IMR-90 (cell line): ENCODE measurements at regions of chr4 and their contacts with region 1.

Region 1: DNA sequence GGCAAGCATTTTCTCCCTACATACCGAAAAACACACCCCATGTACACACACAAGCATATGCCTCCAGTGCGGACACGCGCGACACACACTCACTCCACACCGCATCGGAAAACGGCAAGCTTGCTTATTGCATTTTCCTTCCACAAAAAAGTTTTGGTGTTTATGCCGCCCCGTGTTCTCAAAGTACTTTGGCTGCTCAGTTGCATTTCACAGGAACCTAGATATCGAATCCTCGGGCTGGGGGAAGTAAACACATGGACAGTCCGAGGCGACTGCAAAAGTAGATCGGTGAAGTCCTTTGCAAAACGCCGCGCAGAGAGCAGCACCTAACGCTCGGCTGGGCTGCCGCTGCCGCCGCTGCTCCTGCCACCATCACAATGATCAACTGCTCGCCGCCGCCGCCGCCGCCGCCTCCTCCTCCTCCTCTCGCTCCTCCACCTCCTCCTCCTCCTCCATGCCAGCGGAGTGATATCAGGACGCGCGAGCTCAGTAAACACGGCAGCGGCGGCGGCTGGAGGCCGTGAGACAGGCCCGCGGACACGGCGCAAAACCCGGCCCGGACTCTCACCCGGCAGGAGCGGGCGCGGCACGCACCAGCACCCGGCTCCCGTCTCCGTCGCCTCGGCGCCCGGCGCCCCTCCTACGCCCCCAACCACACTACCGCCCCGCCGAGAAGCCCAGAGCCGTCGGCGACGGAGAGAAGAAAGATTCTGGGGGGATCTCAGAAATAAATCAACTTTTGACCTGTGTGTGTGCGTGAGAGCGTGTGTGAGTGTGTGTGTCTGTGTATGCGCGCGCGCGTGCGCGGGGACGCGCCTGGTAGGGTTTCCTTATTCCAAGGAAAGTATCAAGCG is at the start of gene MAML3:
- DNase-seq: peak; percentile 96
- ATAC-seq: peak; percentile 45
- H3K4me3 ChIP-seq: peak within 1 kb of the TSS; percentile 90
- H3K27ac ChIP-seq: peak within 1 kb of the TSS; percentile 97
- H3K4me1 ChIP-seq: peaks cover 3% of the 10 kb centered on the region; the same call in 1 of the 2 replicates
- H3K27me3 ChIP-seq: no peaks in the 10 kb centered on the region
- CTCF ChIP-seq: no peak
- POLR2A ChIP-seq: peak; percentile 62; the same call in 1 of the 2 replicates
- RAD21 ChIP-seq: peak; percentile 45
- total RNA-seq, gene MAML3: 0.90 and 1.1 TPM in 2 replicates

Region 2: GRCh38 chr4:139665690-139666529 is 488.0 kb before region 1 on chr4 and contains the start of gene MGST2:
- CTCF ChIA-PET with region 1: no interaction called
- POLR2A ChIA-PET with region 1: interaction called, 13 read pairs
- dilution Hi-C with region 1: no loop called
- in situ Hi-C with region 1: no loop called
- intact Hi-C with region 1: no loop called
- DNase-seq: peak; percentile 79
- ATAC-seq: peak; percentile 80
- H3K4me3 ChIP-seq: peak within 1 kb of the TSS; percentile 44
- H3K27ac ChIP-seq: peak within 1 kb of the TSS; percentile 73
- H3K4me1 ChIP-seq: peaks cover 2% of the 10 kb centered on the region; the same call in 1 of the 2 replicates
- H3K27me3 ChIP-seq: no peaks in the 10 kb centered on the region
- CTCF ChIP-seq: no peak
- POLR2A ChIP-seq: no peak
- RAD21 ChIP-seq: no peak
- total RNA-seq, gene MGST2: 4.8 and 8.1 TPM in 2 replicates

Region 3: DNA sequence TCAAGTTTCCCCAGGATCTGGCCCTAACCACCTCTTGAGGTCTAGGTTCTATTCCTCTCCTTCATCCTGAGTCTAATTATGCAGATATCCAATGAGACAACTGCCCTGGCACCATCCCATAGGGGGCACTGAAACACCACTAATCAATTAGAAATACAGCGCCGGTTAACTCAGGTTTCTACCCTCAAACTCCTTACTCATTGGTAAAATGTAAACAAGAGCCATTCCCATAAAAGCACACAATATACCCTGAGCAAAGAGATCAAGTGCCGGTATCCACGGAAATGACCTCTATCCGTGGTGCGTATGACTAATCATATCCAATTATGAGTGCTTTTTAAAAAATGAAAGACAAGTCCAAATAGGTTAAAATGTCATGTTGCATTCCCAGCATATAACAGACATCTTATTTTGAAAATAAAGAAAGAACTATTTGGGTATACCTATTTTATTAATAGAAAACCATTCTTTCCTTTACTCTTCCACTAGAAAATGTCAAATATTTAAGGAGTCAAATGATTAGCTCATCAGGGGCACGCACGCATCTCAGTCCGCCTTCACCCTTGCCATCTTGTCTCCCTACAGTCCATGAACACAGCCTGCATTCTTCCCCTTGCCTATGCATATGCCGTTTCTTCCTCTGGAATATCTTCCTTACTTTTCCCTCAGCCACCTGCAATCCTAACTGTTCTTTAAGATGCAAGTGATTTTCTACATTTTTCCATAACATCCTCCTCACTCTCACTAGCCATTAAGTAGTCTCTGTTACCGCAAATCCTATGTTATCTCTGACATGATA is 141.1 kb before region 1 on chr4:
- CTCF ChIA-PET with region 1: no interaction called
- POLR2A ChIA-PET with region 1: no interaction called
- dilution Hi-C with region 1: no loop called
- in situ Hi-C with region 1: loop called (anchors 10 kb)
- intact Hi-C with region 1: loop called (anchors 1 kb)
- DNase-seq: peak; percentile 95
- ATAC-seq: peak; percentile 98
- H3K4me3 ChIP-seq: no peak overlapping the region
- H3K27ac ChIP-seq: no peak overlapping the region
- H3K4me1 ChIP-seq: peaks cover 4% of the 10 kb centered on the region
- H3K27me3 ChIP-seq: no peaks in the 10 kb centered on the region
- CTCF ChIP-seq: peak; percentile 91
- POLR2A ChIP-seq: no peak
- RAD21 ChIP-seq: peak; percentile 95

Region 4: GRCh38 chr4:140252742-140253555 is 99.0 kb after region 1 on chr4:
- CTCF ChIA-PET with region 1: interaction called, 3 read pairs
- POLR2A ChIA-PET with region 1: interaction called, 14 read pairs
- dilution Hi-C with region 1: no loop called
- in situ Hi-C with region 1: loop called (anchors 5 kb)
- intact Hi-C with region 1: loop called (anchors 1 kb)
- DNase-seq: peak; percentile 56
- ATAC-seq: peak; percentile 84
- H3K4me3 ChIP-seq: peak overlapping the region; percentile 42
- H3K27ac ChIP-seq: peak overlapping the region; percentile 78
- H3K4me1 ChIP-seq: peaks cover 25% of the 10 kb centered on the region
- H3K27me3 ChIP-seq: no peaks in the 10 kb centered on the region
- CTCF ChIP-seq: peak; percentile 89
- POLR2A ChIP-seq: no peak
- RAD21 ChIP-seq: peak; percentile 88

Region 5: DNA sequence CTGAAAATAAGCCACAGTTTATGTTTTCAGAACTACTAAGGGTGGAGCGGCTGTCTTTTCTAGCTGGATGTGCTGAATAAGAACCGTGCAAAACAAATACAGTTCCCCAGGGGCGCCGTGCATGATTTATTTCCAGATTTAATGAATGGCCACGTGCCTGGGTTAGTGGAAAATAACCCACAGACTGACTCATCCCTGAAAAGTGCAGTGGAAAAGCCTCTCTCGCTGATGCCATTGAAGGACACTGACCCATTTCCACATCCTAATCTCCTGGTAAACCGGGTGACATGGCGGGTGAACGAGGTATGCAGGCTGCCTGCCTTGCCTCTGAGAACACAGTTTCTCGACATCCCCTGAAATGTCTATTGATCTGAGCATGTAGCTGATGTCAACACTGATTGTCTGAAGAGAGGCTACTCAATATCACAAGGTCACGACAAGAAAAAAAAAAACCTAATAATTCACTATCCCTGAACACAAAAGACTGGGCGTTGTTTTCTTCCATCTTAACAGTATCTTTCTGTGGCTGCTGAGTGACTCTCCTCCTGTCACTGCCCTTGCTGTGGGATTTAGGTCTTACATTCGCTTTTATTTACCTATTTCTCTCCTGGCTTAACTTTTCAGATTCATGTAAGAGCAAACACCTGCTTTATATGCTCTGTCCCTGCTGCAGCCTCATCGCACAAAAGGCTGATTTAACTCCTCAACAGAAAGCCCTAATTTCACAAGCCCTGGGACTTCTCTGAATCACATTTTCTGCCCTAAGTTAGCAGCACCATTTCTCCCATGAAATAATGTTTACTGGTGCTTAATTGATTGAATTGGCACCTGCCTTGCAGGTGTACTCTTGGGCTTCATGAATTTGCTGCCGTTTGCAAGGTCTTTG is 142.6 kb after region 1 on chr4:
- CTCF ChIA-PET with region 1: no interaction called
- POLR2A ChIA-PET with region 1: no interaction called
- dilution Hi-C with region 1: no loop called
- in situ Hi-C with region 1: no loop called
- intact Hi-C with region 1: no loop called
- DNase-seq: peak; percentile 89
- ATAC-seq: peak; percentile 74
- H3K4me3 ChIP-seq: no peak overlapping the region
- H3K27ac ChIP-seq: no peak overlapping the region
- H3K4me1 ChIP-seq: peaks cover 20% of the 10 kb centered on the region
- H3K27me3 ChIP-seq: peaks cover 14% of the 10 kb centered on the region
- CTCF ChIP-seq: no peak
- POLR2A ChIP-seq: no peak
- RAD21 ChIP-seq: no peak

Region 6: GRCh38 chr4:140359562-140360427 is 205.8 kb after region 1 on chr4:
- CTCF ChIA-PET with region 1: no interaction called
- POLR2A ChIA-PET with region 1: no interaction called
- dilution Hi-C with region 1: no loop called
- in situ Hi-C with region 1: no loop called
- intact Hi-C with region 1: loop called (anchors 1 kb)
- DNase-seq: peak; percentile 81
- ATAC-seq: peak; percentile 89
- H3K4me3 ChIP-seq: no peak overlapping the region
- H3K27ac ChIP-seq: no peak overlapping the region
- H3K4me1 ChIP-seq: no peaks in the 10 kb centered on the region; the same call in 1 of the 2 replicates
- H3K27me3 ChIP-seq: peaks cover 12% of the 10 kb centered on the region
- CTCF ChIP-seq: peak; percentile 64
- POLR2A ChIP-seq: no peak
- RAD21 ChIP-seq: peak; percentile 61